Activated CD4-positive, alpha-beta T cell treated with anti-CD3 and anti-CD28 coated beads, Interleukin-2, amount 10 ng/mL, durations not matched to agents 24 days and 14 days (primary cell): ENCODE measurements at regions of chr15 and their contacts with region 1.

Region 1: DNA sequence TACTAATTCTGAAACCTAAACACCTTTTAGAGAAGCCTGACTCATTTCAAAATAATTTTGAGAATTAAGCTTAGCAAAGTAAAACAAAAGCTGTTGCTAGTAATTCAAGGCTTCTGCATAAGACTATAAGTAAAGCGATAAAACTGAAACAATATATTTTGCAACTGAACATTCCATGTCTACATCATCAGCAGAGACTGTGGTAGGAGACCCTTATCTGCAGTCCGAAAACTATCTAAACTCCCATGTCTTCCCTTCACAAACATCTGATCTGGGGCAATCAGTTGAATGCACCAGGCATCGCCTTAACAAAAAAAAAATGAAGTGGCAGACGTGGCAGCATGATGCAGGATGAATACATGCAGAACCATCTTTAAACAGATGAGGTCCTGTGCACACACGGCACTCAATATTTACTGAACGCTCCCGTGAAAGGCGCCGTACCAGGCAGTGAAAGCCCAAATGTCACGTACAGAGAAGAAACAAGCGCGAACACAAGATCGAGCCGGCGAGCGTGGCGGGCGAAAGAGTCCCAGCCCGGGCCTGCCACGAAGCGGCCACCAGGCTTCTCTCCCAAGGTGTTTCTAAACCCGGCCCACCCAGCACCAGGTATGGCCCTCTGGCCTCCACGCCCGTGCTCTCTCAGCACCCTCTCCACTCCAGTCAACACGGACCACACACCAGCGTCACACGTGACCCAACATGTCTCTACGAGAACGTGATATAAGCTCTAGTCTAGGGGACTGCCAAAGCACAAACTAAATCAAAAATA is 63.0 kb downstream of the CHSY1 start:
- DNase-seq: no peak
- H3K4me3 Mint-ChIP-seq: peak overlapping the region; percentile 67
- H3K27ac Mint-ChIP-seq: peak overlapping the region; percentile 91
- H3K4me1 Mint-ChIP-seq: peaks cover 79% of the 10 kb centered on the region
- H3K27me3 Mint-ChIP-seq: no peaks in the 10 kb centered on the region

Region 2: DNA sequence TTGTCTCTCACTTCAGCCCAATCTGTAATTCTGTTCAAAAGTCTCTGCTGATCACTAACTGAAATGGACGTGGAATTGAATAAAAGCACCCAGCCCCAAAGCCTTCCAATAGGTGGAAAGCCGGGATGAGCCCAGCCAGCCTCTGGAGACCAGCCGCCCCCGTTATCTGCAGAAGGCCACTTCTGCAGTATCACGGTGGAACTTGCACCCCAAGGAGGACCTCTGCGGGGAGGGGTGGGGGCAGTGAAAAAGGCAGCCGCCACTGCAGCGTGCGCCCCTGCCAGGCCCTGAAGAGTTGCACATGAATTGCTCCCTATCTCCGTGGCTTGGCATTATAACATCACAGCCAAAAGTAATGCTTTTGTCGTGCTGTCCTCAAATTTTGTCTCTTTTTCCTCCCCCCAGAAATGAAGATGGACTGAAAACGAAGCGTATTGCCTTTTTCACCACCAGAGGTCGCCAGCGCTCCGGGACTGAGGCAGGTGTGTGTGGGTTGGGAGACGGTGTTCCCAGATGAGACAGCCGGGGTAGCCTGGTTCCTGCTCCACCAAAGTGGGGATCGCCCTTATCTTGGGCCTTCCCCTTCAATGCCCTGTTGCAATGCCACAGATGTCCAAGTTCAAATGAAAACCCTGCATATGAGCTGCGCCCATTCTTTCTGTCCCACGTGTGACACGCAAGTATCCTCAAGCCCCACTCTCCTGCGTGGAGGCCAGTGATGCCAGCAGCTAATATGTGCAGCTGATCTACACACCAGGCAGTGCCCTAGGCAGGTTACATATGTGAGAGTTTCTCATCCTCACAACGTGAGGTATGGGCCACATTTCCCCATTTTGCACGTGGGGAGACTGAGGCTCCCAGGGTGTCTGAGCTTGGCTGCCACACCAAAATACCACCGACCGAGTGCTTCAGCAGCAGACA is 173.6 kb before region 1 on chr15:
- intact Hi-C with region 1: no loop called
- DNase-seq: peak; percentile 91
- H3K4me3 Mint-ChIP-seq: no peak overlapping the region
- H3K27ac Mint-ChIP-seq: no peak overlapping the region
- H3K4me1 Mint-ChIP-seq: peaks cover 2% of the 10 kb centered on the region
- H3K27me3 Mint-ChIP-seq: peaks cover 5% of the 10 kb centered on the region

Region 3: DNA sequence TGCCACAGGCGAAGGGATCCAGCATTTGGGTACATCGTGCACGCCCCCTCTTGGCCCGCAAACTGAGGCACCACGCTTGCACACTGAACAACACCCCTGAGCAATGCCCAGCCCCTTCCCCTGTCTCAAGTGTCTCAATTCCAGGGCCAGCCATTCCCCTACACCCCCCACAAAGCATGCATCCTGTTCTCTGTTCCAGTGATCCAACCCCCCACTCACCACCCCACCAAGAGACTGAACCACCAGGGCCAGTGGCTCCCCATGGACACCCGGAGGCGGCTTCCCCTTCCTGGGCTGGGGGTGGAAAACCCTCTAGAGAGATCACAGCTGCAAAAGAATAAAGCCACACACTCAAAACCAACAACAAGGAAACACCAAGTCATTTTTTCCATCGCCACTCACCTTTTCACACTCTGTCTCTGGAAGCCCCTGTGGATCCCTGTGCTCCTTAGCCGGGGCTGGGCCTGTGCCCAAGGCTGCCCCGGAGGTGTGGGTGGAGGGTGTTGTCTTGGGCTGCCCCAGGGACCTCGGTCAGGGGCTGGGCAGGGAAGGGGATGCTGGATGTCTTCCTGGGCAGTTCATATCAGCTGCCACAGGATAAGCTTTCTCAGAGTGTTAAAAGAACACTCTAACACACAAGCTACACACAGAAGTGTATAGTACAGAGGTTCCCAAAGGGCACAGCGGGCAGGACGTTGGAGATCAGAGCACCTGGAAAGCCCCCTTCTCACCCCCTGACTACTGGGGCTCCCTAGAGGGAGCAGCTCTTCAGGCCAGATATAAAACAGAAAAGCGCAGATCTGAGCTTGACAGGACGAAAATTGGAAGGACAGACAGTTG is 29.5 kb before region 1 on chr15:
- intact Hi-C with region 1: loop called (anchors 1 kb)
- DNase-seq: peak; percentile 80
- H3K4me3 Mint-ChIP-seq: peak overlapping the region; percentile 64
- H3K27ac Mint-ChIP-seq: peak overlapping the region; percentile 90
- H3K4me1 Mint-ChIP-seq: peaks cover 35% of the 10 kb centered on the region
- H3K27me3 Mint-ChIP-seq: no peaks in the 10 kb centered on the region

Region 4: GRCh38 chr15:101251830-101252820 is 63.3 kb after region 1 on chr15 and contains the start of gene CHSY1:
- intact Hi-C with region 1: loop called (anchors 5 kb)
- DNase-seq: peak; percentile 97
- H3K4me3 Mint-ChIP-seq: peak within 1 kb of the TSS; percentile 91
- H3K27ac Mint-ChIP-seq: peak within 1 kb of the TSS; percentile 93
- H3K4me1 Mint-ChIP-seq: peaks cover 57% of the 10 kb centered on the region
- H3K27me3 Mint-ChIP-seq: no peaks in the 10 kb centered on the region
- total RNA-seq, gene CHSY1: 61.7 and 62.6 TPM in 2 replicates